Gastrocnemius medialis (tissue), 4 donors: ENCODE measurements at regions of chr20 and their contacts with region 1.

Region 1: DNA sequence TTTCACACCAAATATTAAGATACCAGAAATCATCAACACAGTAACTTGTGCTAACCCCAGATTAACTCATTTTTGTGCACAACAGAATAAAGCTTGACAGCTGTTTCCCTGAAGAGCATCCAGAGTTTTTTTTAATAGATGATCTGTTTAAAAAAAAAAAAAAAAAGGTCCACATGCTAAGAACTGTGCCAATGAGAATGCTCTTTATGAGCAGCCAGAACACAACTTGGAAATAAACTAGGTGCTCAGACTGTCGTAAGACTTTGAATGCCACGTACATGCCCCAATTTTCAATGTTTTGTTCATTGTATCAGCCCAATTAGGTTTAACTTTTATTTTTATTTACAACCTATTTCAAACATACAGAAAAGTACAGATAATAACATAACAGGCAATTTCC is 47.3 kb downstream of the STAU1 start:
- DNase-seq: no peak
- ATAC-seq: peak; percentile 56 to 69
- H3K4me3 ChIP-seq: no peak overlapping the region
- H3K27ac ChIP-seq: peak overlapping the region in 3 of 4 donors; percentile 17 to 44 (median 40)
- H3K4me1 ChIP-seq: peaks cover 12 to 19% of the 10 kb centered on the region in 2 donors
- H3K27me3 ChIP-seq: no peaks in the 10 kb centered on the region
- CTCF ChIP-seq: no peak
- POLR2A ChIP-seq: no peak

Region 2: GRCh38 chr20:47956342-47956995 is 1184.4 kb before region 1 on chr20:
- in situ Hi-C with region 1: no loop called
- intact Hi-C with region 1: no loop called
- DNase-seq: no peak
- ATAC-seq: no peak
- H3K4me3 ChIP-seq: no peak overlapping the region
- H3K27ac ChIP-seq: no peak overlapping the region
- H3K4me1 ChIP-seq: no peaks in the 10 kb centered on the region
- H3K27me3 ChIP-seq: peaks cover 0 to 5% (median 0%) of the 10 kb centered on the region in 3 donors
- CTCF ChIP-seq: no peak
- POLR2A ChIP-seq: no peak

Region 3: GRCh38 chr20:49179368-49180277 is 38.8 kb after region 1 on chr20:
- in situ Hi-C with region 1: no loop called
- intact Hi-C with region 1: loop called (anchors 5 kb)
- DNase-seq: no peak
- ATAC-seq: no peak
- H3K4me3 ChIP-seq: no peak overlapping the region
- H3K27ac ChIP-seq: peak overlapping the region in 3 of 4 donors; percentile 3 to 60 (median 46)
- H3K4me1 ChIP-seq: peaks cover 27 to 29% of the 10 kb centered on the region in 2 donors
- H3K27me3 ChIP-seq: no peaks in the 10 kb centered on the region
- CTCF ChIP-seq: no peak
- POLR2A ChIP-seq: no peak